ENCODE measurements at regions of chr15 and their contacts with region 1.

Region 1: GRCh38 chr15:41989259-41989933 is 17.0 kb upstream of the EHD4 start:
- DNase-seq: peak; percentile 85
- H3K4me3 ChIP-seq: no peak overlapping the region
- H3K27ac ChIP-seq: no peak overlapping the region
- H3K4me1 ChIP-seq: no peaks in the 10 kb centered on the region
- H3K27me3 ChIP-seq: peaks cover 0 to 12% (median 0%) of the 10 kb centered on the region in 3 donors
- CTCF ChIP-seq: peak; percentile 72 to 98 (median 86)
- EP300 ChIP-seq: no peak
- POLR2A ChIP-seq: no peak

Region 2: DNA sequence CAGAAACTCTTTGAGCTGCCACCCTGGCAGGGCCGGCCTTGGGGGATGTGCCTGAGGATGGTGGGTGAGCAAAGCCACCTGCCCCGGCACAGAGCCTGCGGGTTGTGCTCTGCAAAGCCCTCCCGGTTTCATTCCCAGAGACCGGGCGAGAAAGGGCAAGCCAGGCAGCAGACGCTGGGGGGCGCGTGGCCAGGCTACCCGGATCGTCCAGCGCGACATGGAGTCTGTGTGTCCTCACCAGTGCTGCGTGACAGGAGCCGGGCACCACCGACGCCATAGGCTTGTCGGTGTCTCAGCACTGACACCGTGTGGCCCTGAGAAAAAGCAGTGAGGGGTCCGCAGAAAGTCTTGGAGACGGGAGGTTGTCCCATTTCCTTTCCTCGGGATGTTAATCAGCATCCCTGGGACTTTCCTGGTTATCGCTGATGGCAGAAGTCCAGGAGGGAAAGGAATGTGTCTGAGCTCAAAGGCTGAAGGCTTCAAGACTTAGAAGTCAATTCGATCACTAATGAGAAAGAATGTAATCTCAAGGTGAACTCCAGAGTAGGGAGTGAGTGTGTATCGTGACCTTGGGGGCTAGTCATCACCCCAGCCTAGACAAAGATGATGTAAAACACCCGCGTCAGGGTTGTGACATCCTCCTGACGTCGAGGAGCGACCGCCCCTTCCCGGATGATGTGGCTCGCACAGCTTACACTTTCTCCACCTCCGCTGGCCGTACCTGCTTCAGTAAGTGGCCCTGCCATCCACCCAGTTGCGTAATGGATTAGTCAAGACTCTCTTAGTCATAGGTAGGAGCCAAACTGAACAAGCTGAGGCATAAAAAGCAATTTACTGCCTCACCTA is 67.8 kb after region 1 on chr15:
- intact Hi-C with region 1: loop called (anchors 5 kb)
- DNase-seq: no peak
- H3K4me3 ChIP-seq: peak overlapping the region in 3 of 4 donors; percentile 15 to 32 (median 21)
- H3K27ac ChIP-seq: no peak overlapping the region
- H3K4me1 ChIP-seq: peaks cover 0 to 10% (median 8%) of the 10 kb centered on the region in 4 donors
- H3K27me3 ChIP-seq: peaks cover 0 to 4% (median 0%) of the 10 kb centered on the region in 3 donors
- CTCF ChIP-seq: peak in 2 of 4 experiments; percentile 19 to 33
- EP300 ChIP-seq: no peak
- POLR2A ChIP-seq: no peak

Region 3: GRCh38 chr15:42084460-42085235 is 95.3 kb after region 1 on chr15:
- intact Hi-C with region 1: loop called (anchors 1 kb)
- DNase-seq: no peak
- H3K4me3 ChIP-seq: no peak overlapping the region
- H3K27ac ChIP-seq: no peak overlapping the region
- H3K4me1 ChIP-seq: peaks cover 0 to 4% (median 0%) of the 10 kb centered on the region in 4 donors
- H3K27me3 ChIP-seq: peaks cover 5 to 21% (median 6%) of the 10 kb centered on the region in 3 donors
- CTCF ChIP-seq: peak; percentile 45 to 92 (median 88)
- EP300 ChIP-seq: no peak
- POLR2A ChIP-seq: no peak

Region 4: GRCh38 chr15:42102646-42103235 is 113.3 kb after region 1 on chr15:
- intact Hi-C with region 1: no loop called
- DNase-seq: no peak
- H3K4me3 ChIP-seq: no peak overlapping the region
- H3K27ac ChIP-seq: no peak overlapping the region
- H3K4me1 ChIP-seq: no peaks in the 10 kb centered on the region
- H3K27me3 ChIP-seq: peaks cover 0 to 11% (median 0%) of the 10 kb centered on the region in 3 donors
- CTCF ChIP-seq: no peak
- EP300 ChIP-seq: no peak
- POLR2A ChIP-seq: no peak

Region 5: DNA sequence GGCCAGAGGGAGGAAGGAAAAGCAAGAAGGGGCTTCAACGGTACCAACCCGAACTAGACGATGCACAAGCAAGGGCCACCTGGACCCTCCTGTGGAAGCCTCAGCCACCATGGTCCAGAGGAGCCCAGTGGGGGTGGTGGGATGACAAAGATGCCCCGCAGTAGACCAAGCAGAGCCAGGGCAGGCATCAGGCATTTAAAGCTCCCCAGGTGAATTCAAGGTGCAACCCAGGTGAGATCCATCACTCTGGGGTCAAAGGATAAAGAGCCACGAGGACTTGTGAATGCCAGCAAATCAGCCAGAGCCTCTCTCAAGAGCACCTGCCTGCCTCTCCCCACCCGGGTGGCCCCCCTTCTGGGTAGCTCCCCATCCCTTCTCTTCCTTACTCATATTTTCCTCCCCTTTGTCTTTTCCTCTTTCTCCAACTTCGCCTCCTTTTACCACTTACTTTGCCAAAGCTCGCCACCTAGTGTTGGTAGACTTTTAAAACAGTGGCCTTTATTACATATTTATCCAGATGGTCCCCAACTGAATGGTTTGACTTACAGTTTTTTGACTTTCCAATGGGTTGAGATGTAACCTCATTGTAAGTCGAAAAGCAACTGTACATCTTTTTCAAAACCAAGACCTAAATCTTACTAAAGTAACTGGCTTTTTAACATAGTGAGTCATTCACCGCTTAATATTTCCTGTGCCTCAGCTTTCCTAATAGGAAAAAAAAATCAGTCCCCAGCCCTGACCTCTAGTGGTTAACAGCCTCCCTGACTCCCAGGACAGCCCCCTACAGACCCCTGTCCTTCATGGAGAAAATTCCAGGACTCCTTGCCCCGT is 148.2 kb after region 1 on chr15:
- intact Hi-C with region 1: loop called (anchors 2 kb)
- DNase-seq: peak; percentile 28
- H3K4me3 ChIP-seq: no peak overlapping the region
- H3K27ac ChIP-seq: no peak overlapping the region
- H3K4me1 ChIP-seq: no peaks in the 10 kb centered on the region
- H3K27me3 ChIP-seq: no peaks in the 10 kb centered on the region
- CTCF ChIP-seq: peak in 2 of 4 experiments; percentile 34 to 42
- EP300 ChIP-seq: no peak
- POLR2A ChIP-seq: no peak

Measured in sigmoid colon (tissue), 7 donors.